SK-N-SH (cell line): ENCODE measurements at regions of chr11 and their contacts with region 1.

Region 1: DNA sequence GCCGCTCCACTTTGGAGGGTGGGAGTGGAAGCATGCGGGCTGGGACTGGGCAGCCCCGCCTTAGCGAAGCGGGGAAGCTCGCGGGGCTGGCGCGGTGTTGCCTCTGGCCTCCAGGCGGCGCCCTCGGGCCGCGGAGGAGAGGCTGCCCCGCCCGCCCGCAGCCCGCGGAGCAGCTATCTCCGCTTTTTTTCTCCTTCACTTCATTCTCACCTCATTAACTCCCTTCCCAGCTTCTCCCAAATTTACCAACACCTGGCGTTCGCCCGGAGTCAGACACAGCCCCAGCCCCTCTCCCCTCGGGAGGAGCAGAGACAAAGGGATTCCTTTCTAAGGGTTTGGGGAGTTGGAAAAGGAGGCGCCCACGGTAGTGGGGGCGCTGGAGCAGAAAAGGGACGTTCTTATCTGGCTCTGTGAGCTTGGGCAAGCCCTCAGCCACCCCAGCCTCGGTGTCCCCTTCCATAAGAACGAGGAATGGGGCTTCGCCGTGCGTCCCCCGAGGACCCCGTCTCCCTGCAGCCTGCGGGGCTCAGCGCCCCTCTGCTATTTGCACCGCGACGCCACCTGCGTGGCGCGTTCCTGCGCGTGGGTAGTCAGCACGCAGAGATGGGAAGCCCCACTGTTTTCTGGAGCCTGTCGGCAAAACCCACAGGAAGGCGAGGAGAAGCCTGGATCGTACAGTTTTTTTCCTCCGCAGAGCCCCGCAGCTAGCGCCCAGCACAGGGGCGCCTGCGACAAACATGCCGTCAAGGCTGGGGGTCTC is 1.5 kb upstream of the WNT11 start:
- DNase-seq: peak; percentile 94
- H3K4me3 ChIP-seq: peak overlapping the region; percentile 57 to 68
- H3K27ac ChIP-seq: no peak overlapping the region
- H3K4me1 ChIP-seq: peaks cover 0 to 37% of the 10 kb centered on the region in 2 experiments; a peak in 1 of 4 replicates
- H3K27me3 ChIP-seq: peaks cover 10% of the 10 kb centered on the region
- CTCF ChIP-seq: peak; percentile 88
- EP300 ChIP-seq: no peak
- RAD21 ChIP-seq: peak; percentile 76

Region 2: DNA sequence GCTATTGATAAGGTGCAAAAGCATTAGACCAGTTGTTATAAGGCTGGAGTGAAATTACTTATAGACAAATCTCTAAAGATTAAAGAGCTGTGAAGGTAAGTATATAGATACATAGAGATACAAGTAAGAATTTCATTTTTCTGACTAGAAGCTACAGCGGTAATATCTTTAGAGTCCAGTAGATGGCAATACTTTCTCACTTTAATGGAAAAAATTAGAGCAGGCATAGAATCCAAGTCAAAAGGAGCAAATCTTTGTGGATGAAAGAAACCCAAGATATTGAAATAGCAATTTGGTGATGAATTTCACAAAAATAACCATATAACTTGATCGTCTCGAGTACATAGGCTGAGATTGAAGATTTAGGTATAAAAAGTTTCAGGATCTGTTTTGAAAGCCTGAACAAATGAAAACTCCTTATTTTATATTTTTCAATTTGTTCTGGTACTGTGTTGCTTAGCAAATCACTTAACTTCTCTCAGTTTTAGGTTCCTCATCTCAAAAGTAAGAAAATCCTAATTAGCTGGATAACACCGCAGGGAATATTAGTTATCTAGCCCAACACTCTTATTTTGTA is 310.9 kb before region 1 on chr11:
- CTCF ChIA-PET with region 1: interaction called, 174 read pairs
- POLR2A ChIA-PET with region 1: interaction called, 3 read pairs
- DNase-seq: peak; percentile 44
- H3K4me3 ChIP-seq: no peak overlapping the region; a peak in 1 of 4 replicates
- H3K27ac ChIP-seq: no peak overlapping the region
- H3K4me1 ChIP-seq: no peaks in the 10 kb centered on the region; a peak in 2 of 4 replicates
- H3K27me3 ChIP-seq: no peaks in the 10 kb centered on the region
- CTCF ChIP-seq: peak; percentile 81
- EP300 ChIP-seq: no peak
- RAD21 ChIP-seq: peak; percentile 92

Region 3: DNA sequence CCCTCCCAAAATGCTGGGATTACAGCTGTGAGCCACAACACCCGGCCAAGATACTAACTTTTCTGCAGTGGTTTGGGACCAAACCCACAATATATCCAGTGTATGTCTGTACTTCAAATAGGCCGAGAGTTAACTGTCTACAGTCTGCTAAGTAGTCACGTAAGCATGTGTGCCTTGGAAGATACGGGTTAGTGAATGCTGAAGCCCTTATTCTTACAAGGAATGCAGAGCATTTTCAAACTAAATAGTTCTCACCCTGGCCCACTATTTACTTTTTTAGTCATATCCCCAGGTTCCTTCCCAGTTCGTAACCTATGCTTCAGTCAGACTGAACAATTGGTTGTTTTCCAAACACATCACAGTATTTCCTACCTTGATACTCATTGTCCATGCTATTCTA is 177.5 kb before region 1 on chr11:
- CTCF ChIA-PET with region 1: no interaction called
- POLR2A ChIA-PET with region 1: no interaction called
- DNase-seq: no peak
- H3K4me3 ChIP-seq: no peak overlapping the region
- H3K27ac ChIP-seq: no peak overlapping the region
- H3K4me1 ChIP-seq: peaks cover 5 to 12% of the 10 kb centered on the region in 2 experiments; a peak in 3 of 4 replicates
- H3K27me3 ChIP-seq: no peaks in the 10 kb centered on the region
- CTCF ChIP-seq: no peak
- EP300 ChIP-seq: no peak
- RAD21 ChIP-seq: no peak

Region 4: DNA sequence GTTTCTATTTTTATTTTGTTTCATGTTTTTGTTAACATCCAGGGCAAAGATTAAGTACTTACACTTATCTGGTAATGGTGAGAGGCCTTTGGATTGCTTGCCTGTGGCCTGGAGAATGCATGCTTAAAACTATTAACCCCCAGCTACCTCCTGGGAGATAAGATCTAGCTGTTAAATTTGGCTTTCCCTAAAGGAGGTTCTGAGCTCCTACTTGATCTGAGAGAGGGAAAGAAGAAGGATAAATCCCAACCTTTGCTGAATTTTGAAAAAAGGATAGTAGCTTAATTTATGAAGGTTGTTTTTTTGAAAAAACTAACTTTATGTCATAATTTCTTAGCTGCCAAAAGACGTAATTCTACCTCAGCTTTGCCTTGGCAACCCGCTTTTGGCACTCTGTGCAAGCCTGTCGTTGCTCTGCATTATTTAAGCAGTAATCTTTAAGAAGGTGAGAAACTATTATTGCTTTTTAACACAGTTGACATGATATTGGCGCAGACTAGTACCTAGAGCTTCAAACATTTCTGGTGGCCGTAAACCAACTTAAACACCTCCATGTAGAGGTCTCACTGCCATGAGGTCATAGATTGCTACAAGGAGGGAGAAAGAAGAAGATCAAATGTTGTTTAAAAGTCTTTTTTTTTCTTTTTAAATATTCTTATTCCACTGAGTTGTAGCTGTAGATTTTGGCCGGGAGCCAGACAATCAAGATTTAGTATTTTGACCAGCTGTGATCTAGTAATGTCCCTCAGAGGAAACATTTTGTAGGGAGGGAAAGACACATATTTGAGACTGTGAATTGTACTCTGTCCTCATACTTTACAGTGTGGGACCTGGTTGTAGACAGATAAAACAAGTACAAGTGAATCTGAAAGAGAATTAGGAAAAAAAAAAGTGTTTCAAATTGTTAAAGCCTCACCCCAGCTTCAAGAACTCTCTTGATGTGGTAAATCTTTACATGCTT is 75.9 kb before region 1 on chr11:
- CTCF ChIA-PET with region 1: interaction called, 24 read pairs
- POLR2A ChIA-PET with region 1: no interaction called
- DNase-seq: no peak
- H3K4me3 ChIP-seq: no peak overlapping the region
- H3K27ac ChIP-seq: peak overlapping the region in 1 of 2 experiments; percentile 8; a peak in 2 of 4 replicates
- H3K4me1 ChIP-seq: peaks cover 0 to 21% of the 10 kb centered on the region in 2 experiments; a peak in 2 of 4 replicates
- H3K27me3 ChIP-seq: no peaks in the 10 kb centered on the region
- CTCF ChIP-seq: no peak
- EP300 ChIP-seq: no peak
- RAD21 ChIP-seq: no peak

Region 5: DNA sequence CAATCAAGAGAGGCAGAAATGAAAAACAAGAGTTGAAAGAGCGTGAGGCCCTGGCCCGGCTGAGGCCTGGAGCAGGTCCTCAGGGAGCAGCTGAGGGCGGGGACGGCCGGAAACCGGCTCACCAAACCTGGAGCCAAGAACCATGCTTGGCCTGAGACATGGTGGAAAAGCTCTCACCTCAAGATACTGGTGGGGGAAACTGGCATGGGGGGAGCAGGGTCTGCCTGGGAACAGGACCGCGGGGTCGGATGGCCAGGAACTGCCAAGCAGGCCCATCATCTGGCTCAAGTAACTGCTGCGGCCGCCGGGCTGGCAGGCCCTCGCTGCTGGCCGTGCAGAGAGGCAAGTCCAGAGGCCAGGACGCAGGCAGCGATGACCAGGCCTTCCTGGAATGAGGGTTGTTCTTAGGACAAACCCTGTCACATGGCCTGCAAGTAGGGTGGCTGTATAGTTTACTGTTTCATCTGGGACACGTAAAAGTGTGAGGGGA is 17.3 kb after region 1 on chr11:
- CTCF ChIA-PET with region 1: interaction called, 56 read pairs
- POLR2A ChIA-PET with region 1: no interaction called
- DNase-seq: no peak
- H3K4me3 ChIP-seq: no peak overlapping the region
- H3K27ac ChIP-seq: no peak overlapping the region
- H3K4me1 ChIP-seq: peaks cover 0 to 13% of the 10 kb centered on the region in 2 experiments; a peak in 1 of 4 replicates
- H3K27me3 ChIP-seq: no peaks in the 10 kb centered on the region
- CTCF ChIP-seq: no peak
- EP300 ChIP-seq: no peak
- RAD21 ChIP-seq: no peak

Region 6: DNA sequence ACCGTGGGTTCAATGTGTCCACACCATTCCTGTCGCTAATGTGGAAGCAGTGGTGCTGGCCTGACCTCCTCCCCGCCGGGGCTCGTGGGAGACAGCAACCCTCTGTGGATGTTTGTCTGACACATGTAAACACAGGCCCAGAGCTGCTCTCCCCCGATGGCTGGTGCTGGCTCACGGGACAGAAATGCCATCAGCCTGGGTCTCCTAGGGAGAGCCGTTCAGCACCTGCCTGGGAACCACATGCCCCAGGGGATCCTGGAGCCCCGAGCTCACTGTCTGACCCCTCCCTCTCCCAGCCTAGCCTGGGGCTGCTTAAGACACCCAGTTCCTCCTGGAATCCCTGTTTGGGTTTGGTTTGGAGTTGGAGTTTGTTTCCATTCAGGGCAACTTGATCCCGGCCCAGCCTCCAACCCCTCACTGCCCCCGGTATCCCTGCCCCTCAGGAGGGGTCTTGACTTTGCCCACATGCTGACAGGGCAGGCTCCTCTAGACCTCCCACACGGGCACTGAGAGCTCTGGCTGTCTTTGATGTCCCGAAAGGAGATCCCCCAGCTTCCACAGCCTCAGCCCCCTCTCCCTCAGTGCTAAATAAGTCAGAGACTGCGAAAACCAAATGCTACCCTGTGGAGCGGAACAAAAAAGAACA is 49.4 kb after region 1 on chr11:
- CTCF ChIA-PET with region 1: interaction called, 17 read pairs
- POLR2A ChIA-PET with region 1: no interaction called
- DNase-seq: no peak
- H3K4me3 ChIP-seq: no peak overlapping the region
- H3K27ac ChIP-seq: no peak overlapping the region
- H3K4me1 ChIP-seq: no peaks in the 10 kb centered on the region
- H3K27me3 ChIP-seq: peaks cover 17% of the 10 kb centered on the region; the same call in 1 of the 2 replicates
- CTCF ChIP-seq: no peak
- EP300 ChIP-seq: no peak
- RAD21 ChIP-seq: no peak

Region 7: DNA sequence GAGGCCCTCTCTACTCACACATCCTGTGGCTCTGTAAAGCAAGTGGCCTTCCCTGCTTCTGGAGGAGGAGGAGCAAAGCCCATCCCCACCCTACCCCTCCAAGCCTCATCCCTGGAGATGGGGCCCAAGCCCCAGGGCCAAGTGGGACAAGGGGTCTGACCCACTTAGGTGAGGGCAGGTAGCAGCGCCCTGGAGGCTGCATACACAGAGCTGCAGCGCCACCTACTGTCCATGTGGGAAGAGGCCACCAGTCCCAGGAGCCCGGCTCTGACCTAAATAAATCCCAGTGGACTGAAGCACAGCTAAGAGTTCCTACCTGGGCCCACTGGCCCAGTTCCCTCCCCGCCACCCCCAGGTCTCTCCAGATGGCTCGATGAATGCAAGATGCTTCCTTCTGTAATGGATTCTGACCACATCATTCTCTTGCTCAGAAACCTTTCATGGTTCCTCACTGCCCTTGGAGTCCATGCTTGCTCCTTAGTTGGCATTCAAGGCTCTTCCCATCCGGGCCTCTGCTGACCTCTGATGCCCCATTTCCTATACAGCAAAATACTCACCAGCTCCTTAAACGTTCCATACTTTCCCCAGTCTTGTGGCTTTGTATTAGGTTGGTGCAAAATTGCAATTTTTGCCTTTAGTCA is 111.0 kb after region 1 on chr11:
- CTCF ChIA-PET with region 1: interaction called, 328 read pairs
- POLR2A ChIA-PET with region 1: interaction called, 3 read pairs
- DNase-seq: peak; percentile 91
- H3K4me3 ChIP-seq: no peak overlapping the region; a peak in 1 of 4 replicates
- H3K27ac ChIP-seq: no peak overlapping the region
- H3K4me1 ChIP-seq: no peaks in the 10 kb centered on the region; a peak in 1 of 4 replicates
- H3K27me3 ChIP-seq: no peaks in the 10 kb centered on the region
- CTCF ChIP-seq: peak; percentile 91
- EP300 ChIP-seq: no peak
- RAD21 ChIP-seq: peak; percentile 97